Stomach (tissue), 19 donors: ENCODE measurements at regions of chrX and their contacts with region 1.

Region 1: GRCh38 chrX:39149761-39150160 is 348.5 kb downstream of the MID1IP1 start:
- DNase-seq: peak; percentile 80 to 87
- H3K4me3 ChIP-seq: no peak overlapping the region
- H3K27ac ChIP-seq: no peak overlapping the region
- H3K4me1 ChIP-seq: peaks cover 0 to 13% (median 3%) of the 10 kb centered on the region in 4 donors
- H3K27me3 ChIP-seq: no peaks in the 10 kb centered on the region
- CTCF ChIP-seq: peak in 5 of 7 experiments; percentile 27 to 59 (median 40)
- EP300 ChIP-seq: no peak
- POLR2A ChIP-seq: no peak

Region 2: GRCh38 chrX:38774249-38774648 is 375.5 kb before region 1 on chrX:
- intact Hi-C with region 1: loop called (anchors 10 kb)
- DNase-seq: no peak
- H3K4me3 ChIP-seq: no peak overlapping the region
- H3K27ac ChIP-seq: no peak overlapping the region
- H3K4me1 ChIP-seq: no peaks in the 10 kb centered on the region
- H3K27me3 ChIP-seq: peaks cover 0 to 3% (median 0%) of the 10 kb centered on the region in 3 donors
- CTCF ChIP-seq: no peak
- EP300 ChIP-seq: no peak
- POLR2A ChIP-seq: no peak